Dendritic cell treated with granulocyte-macrophage colony-stimulating factor and Interleukin-4, amounts not matched to agents 40 ng/mL and 50 ng/mL, for 4 days (primary cell): ENCODE measurements at regions of chr17 and their contacts with region 1.

Region 1: DNA sequence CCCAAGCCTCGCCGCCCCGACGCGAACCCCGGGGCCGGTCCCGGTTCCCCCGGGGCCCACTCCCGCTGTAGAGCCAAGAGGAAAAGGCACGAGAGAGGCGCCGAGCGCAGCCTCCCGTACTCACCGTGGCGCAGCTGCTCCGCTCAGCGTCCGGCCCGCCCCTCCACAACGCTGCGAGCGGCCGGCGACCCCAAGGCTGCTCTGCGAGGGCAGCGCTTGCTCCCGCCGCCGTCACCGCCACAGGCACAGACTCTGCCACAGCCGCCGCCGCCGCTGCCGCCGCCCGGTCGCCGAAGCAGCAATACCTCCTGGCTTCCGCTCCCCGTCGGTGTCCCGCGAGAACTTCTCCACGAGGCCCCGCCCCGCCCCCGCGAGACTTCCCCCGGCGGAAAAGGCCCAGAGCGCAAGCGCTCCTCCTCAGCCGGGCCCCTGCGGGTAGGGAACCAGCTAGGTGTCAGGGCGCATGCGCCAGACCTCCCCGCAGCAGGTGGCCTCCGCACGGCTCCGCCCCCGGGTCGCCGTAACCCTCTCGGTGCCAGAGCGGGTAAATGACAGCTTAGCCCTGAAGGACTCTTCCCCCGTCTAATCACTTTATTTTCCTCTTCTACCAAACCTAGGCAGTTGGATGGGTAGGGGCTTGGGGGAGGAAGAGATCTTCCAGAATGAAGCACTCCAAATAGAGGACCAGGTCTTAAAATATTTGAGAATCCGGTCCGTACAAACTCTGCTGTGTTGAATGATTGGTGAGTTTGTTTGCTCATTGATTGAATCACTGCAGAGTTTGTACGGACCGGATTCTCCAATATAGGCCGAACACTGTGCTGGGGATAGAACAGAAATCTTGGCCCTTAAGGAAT is at the start of gene GRB2:
- H3K4me3 Mint-ChIP-seq: peak within 1 kb of the TSS; percentile 97
- H3K27ac Mint-ChIP-seq: peak within 1 kb of the TSS; percentile 97
- H3K4me1 Mint-ChIP-seq: peaks cover 28% of the 10 kb centered on the region
- H3K27me3 Mint-ChIP-seq: no peaks in the 10 kb centered on the region

Region 2: DNA sequence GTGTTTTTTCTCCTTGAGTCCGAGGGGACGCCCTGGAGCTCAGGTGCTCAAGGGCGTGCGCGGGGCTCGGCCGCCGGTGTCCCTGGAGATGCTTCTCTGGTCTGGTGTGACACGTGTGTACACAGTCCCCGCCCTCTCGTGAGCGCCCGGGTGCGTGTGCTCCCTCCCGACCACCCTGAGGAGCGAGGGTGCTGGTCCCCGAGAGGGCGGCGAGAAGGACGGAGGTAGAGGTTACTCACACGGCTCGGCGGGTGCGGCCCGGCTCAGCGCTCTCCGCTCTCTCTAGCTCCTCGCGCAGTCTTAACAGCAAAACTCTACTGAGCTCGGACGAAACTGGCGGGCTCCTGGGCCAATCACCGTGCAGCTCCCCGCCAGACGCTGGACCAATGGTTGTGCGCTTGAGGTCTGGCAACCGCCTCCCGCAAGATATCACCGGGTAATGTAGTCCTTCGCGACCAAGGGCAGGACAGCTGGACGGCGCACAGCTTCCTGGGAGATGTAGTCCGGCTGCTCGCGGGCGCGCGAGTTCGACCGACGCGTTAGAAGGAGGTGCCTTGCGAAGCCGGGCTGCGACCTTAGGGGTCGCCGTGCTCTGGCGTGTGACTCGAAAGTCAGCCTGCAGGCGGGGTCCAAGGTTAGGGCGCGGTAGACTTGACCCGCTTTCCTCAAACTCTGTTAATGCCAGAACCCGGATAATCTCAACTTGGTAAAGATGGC is 116.3 kb before region 1 on chr17 and contains the start of gene SLC25A19:
- intact Hi-C with region 1: loop called (anchors 2 kb)
- H3K4me3 Mint-ChIP-seq: peak within 1 kb of the TSS; percentile 92
- H3K27ac Mint-ChIP-seq: peak within 1 kb of the TSS; percentile 97
- H3K4me1 Mint-ChIP-seq: peaks cover 71% of the 10 kb centered on the region
- H3K27me3 Mint-ChIP-seq: no peaks in the 10 kb centered on the region

Region 3: DNA sequence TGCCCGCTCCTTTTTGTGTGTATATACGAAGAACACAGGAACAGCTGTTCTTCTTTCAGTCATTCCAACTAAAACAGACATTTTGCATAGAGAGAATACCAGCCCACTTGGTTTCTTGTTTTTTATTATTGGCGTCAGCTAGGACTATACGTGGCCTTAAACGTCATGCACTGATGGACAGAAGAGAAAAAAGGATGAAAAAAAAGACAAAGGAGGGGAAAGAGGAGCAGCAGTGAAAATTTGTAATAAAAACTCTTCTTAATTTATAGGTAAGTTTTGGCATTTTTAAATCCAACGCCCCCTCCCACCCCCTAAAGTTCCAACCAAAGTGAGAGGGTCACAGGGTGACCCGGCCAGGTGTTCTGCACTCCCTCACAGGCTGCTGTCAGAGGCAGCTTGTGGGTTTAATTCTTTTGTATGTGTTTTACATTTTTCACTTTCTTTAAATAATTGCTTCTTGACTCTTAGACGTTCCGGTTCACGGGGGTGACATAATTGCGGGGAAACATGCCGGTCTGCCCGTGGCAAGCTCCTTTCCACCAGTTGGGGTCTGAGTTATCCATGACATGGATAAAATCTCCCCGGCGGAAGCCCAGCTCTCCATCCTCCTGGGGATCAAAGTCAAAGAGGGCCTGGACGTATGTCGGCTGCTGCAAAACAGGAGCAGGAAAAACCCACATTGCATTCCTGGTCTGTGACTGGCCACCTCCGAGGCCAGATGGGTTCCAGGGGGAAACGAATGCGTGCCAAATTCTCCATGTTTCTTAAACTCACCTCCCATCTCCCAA is 85.5 kb before region 1 on chr17:
- intact Hi-C with region 1: loop called (anchors 2 kb)
- H3K4me3 Mint-ChIP-seq: no peak overlapping the region
- H3K27ac Mint-ChIP-seq: peak overlapping the region; percentile 50
- H3K4me1 Mint-ChIP-seq: peaks cover 38% of the 10 kb centered on the region
- H3K27me3 Mint-ChIP-seq: no peaks in the 10 kb centered on the region

Region 4: DNA sequence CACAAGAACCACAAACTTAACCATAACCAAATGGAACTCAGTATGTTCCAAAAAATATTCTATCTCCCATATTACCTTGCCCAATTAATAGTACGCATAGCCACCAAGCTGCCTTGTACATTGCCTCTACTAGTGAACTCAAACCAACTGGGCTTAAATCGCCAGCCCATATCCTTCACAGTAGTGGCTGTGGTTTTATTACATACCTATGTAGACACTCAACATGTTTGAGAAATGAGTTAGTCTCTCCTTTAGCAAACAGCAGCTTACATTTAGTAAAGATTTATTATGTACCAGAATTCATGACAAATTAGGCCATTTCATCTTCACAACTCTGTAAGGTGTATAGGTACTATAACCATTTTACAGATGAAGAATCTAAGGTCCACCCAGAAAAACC is 41.5 kb before region 1 on chr17:
- intact Hi-C with region 1: loop called (anchors 5 kb)
- H3K4me3 Mint-ChIP-seq: no peak overlapping the region
- H3K27ac Mint-ChIP-seq: no peak overlapping the region
- H3K4me1 Mint-ChIP-seq: peaks cover 97% of the 10 kb centered on the region
- H3K27me3 Mint-ChIP-seq: no peaks in the 10 kb centered on the region

Region 5: GRCh38 chr17:75380315-75380714 is 25.3 kb before region 1 on chr17:
- intact Hi-C with region 1: no loop called
- H3K4me3 Mint-ChIP-seq: no peak overlapping the region
- H3K27ac Mint-ChIP-seq: no peak overlapping the region
- H3K4me1 Mint-ChIP-seq: peaks cover 35% of the 10 kb centered on the region
- H3K27me3 Mint-ChIP-seq: no peaks in the 10 kb centered on the region